ENCODE measurements at regions of chr12 and their contacts with region 1.

Region 1: DNA sequence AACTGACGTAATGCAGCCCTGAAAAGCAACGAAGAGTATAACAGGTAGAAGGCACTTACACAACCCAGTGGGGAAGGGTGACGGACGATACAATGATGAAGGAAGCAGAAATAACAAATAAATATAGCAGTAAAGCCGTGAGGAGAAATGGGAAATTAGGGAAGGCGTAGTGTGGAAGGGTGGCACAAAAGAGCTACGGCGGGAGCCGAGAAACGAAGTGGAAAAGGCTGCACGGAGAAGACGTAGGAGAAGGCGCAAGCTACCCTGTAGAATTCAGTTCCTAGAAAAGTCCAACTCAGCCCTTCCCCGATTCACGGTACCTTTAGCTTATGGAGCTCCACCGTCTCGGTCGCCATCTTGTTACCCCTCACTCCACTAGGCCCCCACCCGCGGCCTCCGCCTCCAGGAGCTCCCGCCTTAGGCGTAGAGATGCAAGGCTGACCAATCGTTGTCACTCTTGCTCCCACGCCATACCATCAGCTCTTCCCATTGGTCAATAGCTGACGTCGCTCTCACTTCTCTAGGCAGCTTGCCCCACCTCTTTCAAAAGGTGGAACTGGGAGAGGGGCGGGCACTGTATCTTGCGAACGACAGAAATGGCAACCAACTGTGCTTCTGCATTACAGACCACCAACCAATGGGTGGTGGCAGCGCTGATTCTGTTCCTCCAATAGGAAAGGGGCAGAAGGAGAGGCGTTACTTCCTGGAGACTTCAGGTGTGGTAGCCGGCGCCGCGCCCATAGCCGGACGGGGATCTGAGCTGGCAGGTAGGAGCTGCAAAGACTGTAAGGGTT is at the starts of genes ORMDL2 and SARNP:
- DNase-seq: peak; percentile 97
- H3K4me3 Mint-ChIP-seq: no peak within 1 kb of the TSS
- H3K27ac Mint-ChIP-seq: no peak within 1 kb of the TSS
- H3K4me1 Mint-ChIP-seq: peaks cover 33% of the 10 kb centered on the region
- H3K27me3 Mint-ChIP-seq: no peaks in the 10 kb centered on the region
- total RNA-seq, gene ORMDL2: 58.9 and 61.2 TPM in 2 replicates
- total RNA-seq, gene SARNP: 70.7 and 75.1 TPM in 2 replicates

Region 2: GRCh38 chr12:55642669-55643068 is 174.9 kb before region 1 on chr12:
- intact Hi-C with region 1: no loop called
- DNase-seq: no peak
- H3K4me3 Mint-ChIP-seq: no peak overlapping the region
- H3K27ac Mint-ChIP-seq: no peak overlapping the region
- H3K4me1 Mint-ChIP-seq: peaks cover 32% of the 10 kb centered on the region
- H3K27me3 Mint-ChIP-seq: peaks cover under 1% of the 10 kb centered on the region

Region 3: GRCh38 chr12:55728939-55729823 is 88.4 kb before region 1 on chr12 and contains the start of gene CD63:
- intact Hi-C with region 1: loop called (anchors 2 kb)
- DNase-seq: peak; percentile 50
- H3K4me3 Mint-ChIP-seq: peak within 1 kb of the TSS; percentile 90
- H3K27ac Mint-ChIP-seq: peak within 1 kb of the TSS; percentile 96
- H3K4me1 Mint-ChIP-seq: peaks cover 48% of the 10 kb centered on the region
- H3K27me3 Mint-ChIP-seq: peaks cover 1% of the 10 kb centered on the region
- total RNA-seq, gene CD63: 183 and 198 TPM in 2 replicates

Region 4: DNA sequence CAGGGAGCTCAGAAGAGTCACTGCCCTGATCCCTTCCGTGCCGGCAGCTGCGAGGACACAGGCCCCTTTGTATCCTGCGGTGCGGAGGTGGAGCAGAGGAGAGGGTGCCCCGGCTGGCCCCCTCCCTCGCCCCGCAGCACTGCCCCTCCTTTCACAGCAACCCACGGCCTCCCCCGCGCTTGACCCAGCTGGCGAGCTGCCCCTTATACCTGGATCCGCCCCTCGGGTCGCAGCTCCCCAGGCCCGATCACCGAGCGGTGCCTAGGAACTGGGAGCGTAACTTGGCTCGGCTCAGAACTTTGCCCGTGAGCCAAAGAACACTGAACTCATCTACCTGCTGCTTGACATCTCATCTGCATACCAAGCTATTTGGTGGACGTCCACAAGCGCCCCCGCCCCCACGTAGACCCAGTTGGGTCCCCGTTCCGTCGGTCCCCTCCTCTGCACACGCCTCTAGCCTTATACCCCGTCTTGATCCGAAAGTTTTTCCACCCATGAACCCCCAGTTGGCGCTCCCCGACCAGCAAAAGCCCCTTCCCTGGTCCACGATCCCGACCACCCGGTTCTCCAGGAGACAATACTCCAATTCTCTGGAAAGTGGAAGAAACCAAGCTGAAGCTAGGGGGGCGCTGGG is 12.5 kb after region 1 on chr12:
- intact Hi-C with region 1: loop called (anchors 1 kb)
- DNase-seq: peak; percentile 22
- H3K4me3 Mint-ChIP-seq: peak overlapping the region; percentile 98
- H3K27ac Mint-ChIP-seq: peak overlapping the region; percentile 92
- H3K4me1 Mint-ChIP-seq: peaks cover 37% of the 10 kb centered on the region
- H3K27me3 Mint-ChIP-seq: no peaks in the 10 kb centered on the region

Region 5: DNA sequence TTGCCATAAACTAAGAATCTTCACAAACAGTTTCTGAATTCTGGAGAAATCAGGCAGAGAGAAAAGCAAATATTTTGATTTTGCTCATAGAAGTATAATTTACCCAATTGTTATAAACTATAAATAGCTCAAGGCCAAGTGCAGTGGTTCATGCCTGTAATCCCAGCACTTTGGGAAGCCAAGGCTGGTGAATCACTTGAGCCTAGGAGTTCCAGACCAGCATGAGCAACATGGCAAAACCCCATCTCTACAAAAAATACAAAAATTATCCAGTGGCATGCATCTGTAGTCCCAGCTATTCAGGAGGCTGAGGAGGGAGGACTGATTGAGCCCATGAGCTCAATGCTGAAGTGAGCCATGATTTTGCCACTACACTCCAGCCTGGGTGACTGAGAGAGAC is 44.7 kb after region 1 on chr12:
- intact Hi-C with region 1: no loop called
- DNase-seq: no peak
- H3K4me3 Mint-ChIP-seq: no peak overlapping the region
- H3K27ac Mint-ChIP-seq: no peak overlapping the region
- H3K4me1 Mint-ChIP-seq: no peaks in the 10 kb centered on the region
- H3K27me3 Mint-ChIP-seq: peaks cover 5% of the 10 kb centered on the region

Region 6: GRCh38 chr12:55973598-55974307 is 156.2 kb after region 1 on chr12 and contains the start of gene RAB5B:
- intact Hi-C with region 1: loop called (anchors 1 kb)
- DNase-seq: peak; percentile 98
- H3K4me3 Mint-ChIP-seq: no peak within 1 kb of the TSS
- H3K27ac Mint-ChIP-seq: no peak within 1 kb of the TSS
- H3K4me1 Mint-ChIP-seq: peaks cover 20% of the 10 kb centered on the region
- H3K27me3 Mint-ChIP-seq: no peaks in the 10 kb centered on the region
- total RNA-seq, gene RAB5B: 42.6 and 47.0 TPM in 2 replicates

Region 7: GRCh38 chr12:56104109-56104814 is 286.7 kb after region 1 on chr12 and contains the start of gene PA2G4:
- intact Hi-C with region 1: loop called (anchors 1 kb)
- DNase-seq: peak; percentile 99
- H3K4me3 Mint-ChIP-seq: peak within 1 kb of the TSS; percentile 98
- H3K27ac Mint-ChIP-seq: peak within 1 kb of the TSS; percentile 89
- H3K4me1 Mint-ChIP-seq: peaks cover 49% of the 10 kb centered on the region
- H3K27me3 Mint-ChIP-seq: no peaks in the 10 kb centered on the region
- total RNA-seq, gene PA2G4: 404 and 419 TPM in 2 replicates

Region 8: DNA sequence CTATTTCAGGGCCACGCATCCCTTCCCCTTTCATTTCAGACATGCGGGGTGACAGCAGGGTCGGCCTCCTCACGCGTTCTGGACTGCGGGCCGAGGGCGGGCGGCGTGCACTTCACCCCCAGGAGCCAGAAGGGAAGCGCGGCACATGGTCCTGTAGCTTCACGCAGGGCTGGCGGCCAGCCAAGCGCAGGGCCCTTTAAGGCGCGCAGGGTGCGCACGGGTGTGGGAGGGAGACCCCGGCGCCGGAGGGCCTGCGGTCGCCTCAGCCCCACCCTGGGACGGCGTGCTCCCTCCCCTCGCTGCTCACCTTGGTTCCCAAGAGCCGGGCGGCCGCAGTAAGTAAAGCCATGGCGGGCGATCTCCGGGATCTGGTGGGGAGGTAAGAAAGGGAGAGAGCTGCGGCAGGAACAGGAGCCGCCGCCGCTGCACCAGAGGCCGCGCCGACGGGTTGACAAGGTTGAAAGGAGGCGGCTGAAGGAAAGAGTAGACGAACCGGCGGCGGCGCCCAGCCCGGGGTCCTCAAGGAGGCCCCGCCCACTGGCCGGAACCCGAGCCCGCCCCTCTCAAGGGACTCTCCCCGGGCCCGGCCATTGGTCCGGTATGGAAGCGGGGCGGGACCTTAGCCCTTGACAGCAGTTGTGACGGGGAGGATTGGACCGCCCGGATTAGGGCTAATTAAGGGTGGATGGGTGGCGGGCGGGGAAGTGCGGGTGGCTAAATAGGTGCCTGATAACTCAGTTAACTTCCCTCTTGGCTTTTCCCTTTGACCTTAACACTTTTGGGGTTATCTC is 482.5 kb after region 1 on chr12 and contains the start of gene CS:
- intact Hi-C with region 1: loop called (anchors 1 kb)
- DNase-seq: peak; percentile 98
- H3K4me3 Mint-ChIP-seq: peak within 1 kb of the TSS; percentile 98
- H3K27ac Mint-ChIP-seq: peak within 1 kb of the TSS; percentile 90
- H3K4me1 Mint-ChIP-seq: peaks cover 51% of the 10 kb centered on the region
- H3K27me3 Mint-ChIP-seq: no peaks in the 10 kb centered on the region
- total RNA-seq, gene CS: 269 and 280 TPM in 2 replicates

Measured in activated T-helper 1 cell treated with anti-CD3 and anti-CD28 coated beads, Interleukin-12 subunit alpha, Interleukin-12 subunit beta, Interleukin-2, Interleukin-4 antibody, amounts not matched to agents 30 ng/mL and 10 ng/mL and 1 ng/mL, durations not matched to agents 14 hours and 24 hours and 36 hours (primary cell).